ENCODE measurements at regions of chr5 and their contacts with region 1.

Region 1: GRCh38 chr5:140357726-140358093 is 2.3 kb upstream of the SLC4A9 start:
- DNase-seq: peak; percentile 86
- H3K4me3 Mint-ChIP-seq: peak overlapping the region; percentile 51
- H3K27ac Mint-ChIP-seq: no peak overlapping the region
- H3K4me1 Mint-ChIP-seq: peaks cover 12% of the 10 kb centered on the region
- H3K27me3 Mint-ChIP-seq: peaks cover 19% of the 10 kb centered on the region

Region 2: DNA sequence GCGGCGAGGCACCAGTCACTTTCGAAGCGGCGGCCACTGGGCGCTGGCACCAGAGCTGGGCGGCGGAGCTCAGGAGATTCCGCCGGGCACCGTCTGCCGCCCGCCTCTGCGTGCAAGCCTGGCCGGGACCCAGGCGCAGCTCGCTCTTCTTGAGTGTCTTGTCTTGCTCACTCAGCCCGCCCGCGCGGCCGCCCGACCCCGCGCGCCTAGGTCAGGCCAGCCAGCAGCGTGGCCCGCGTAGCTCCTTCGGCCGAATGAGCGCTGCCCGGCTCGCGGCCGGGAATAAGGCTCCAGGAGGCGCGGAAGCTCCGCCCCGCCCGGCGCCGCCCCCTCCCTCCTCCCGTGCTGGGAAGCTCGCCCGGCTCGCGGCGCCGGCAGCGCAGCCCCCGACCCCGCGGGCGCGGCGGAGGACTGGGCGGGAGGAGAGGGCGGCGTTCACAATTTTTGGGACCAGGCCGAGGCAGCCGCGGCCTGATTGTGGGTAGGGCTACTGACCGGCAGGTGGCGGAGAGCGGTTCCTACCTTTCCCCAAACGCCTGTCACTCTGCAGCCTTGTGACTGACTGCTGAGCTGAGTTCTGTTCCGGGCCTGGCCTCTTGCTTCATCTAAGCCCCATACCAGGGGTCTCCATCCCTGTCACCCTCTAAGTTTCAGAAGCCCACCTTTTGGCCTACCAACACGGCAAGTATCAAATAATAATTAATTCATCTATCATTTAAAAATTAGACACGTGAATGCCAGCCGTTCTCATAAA is 11.2 kb before region 1 on chr5 and contains the start of gene HBEGF:
- CTCF ChIA-PET with region 1: interaction called, 25 read pairs
- DNase-seq: peak; percentile 79
- H3K4me3 Mint-ChIP-seq: peak within 1 kb of the TSS; percentile 82
- H3K27ac Mint-ChIP-seq: peak within 1 kb of the TSS; percentile 79
- H3K4me1 Mint-ChIP-seq: peaks cover 78% of the 10 kb centered on the region
- H3K27me3 Mint-ChIP-seq: peaks cover 20% of the 10 kb centered on the region